ENCODE measurements at regions of chr1 and their contacts with region 1.

Region 1: DNA sequence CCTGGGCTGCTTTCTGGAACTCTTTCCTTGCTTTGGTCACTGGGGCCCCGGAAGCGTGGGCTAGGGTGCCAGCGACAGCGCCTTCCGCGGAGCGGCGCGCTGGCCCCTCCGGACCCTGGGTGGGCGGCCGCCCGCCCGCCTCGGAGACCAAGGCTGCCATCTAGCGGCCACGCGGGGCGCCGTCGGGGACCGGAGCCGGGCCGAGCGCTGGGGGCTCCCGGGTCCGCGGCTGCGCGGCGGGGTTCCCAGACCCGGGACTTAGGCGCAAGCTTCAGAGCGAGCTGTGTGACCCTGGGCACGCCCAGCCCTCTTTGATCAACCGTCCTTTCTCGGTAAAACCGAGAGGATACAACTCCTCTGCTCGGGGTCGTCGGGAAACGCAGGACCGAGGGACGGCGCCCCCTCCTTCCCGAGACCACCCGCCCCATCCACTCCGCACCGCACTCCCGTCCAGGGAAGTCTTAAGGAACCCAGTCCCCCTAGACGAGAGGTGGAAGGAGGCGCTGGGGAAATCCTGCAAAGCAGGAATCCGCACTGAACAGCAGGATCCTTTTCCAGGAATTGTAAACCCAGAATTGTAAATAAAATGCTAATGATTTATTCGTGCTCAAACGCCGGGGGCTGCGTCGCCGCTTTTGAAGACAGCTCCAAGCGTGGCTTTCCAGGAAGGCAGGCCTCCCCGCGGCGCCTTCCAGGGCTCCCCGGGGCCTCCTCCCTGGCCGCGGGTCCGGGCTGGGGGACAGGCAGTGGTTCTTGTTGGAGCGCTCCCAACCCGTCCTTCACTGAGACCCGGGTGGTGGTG is 41.2 kb downstream of the RRAGC start:
- DNase-seq: peak; percentile 79
- CTCF ChIP-seq: peak; percentile 84

Region 2: DNA sequence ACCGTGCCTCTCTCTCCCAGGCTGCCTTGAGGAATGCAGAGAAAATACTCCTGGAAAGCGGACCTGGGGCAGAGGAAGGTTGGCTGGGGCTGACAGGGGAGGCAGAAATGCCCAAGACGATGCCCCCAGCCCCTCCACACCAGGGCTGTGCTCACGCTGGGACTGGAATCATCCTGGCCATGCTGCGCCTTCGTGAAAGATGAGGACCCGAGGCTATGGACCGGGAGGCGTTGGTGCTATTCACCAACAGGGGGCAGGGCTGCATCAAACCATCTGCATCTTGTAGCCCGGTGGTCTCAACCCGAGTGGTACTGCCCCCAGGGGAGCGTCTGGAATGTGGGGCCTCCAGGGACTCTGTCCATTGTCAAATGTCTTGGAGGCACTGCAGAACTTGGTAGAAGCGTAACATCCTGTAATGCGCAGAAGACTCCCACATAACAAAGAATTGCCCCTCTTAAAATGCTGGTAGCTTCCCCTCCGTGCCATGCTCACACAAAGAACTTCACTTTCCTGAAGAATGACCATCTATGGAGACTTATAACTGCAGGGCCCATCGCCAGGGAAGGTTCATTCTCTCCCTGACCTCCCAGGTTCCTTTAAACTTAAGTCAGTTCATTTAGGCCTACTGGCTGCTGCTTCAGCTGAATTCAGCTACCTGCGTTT is 210.0 kb before region 1 on chr1:
- CTCF ChIA-PET with region 1: interaction called, 10 read pairs
- POLR2A ChIA-PET with region 1: no interaction called
- DNase-seq: peak; percentile 65
- CTCF ChIP-seq: peak; percentile 60

Region 3: DNA sequence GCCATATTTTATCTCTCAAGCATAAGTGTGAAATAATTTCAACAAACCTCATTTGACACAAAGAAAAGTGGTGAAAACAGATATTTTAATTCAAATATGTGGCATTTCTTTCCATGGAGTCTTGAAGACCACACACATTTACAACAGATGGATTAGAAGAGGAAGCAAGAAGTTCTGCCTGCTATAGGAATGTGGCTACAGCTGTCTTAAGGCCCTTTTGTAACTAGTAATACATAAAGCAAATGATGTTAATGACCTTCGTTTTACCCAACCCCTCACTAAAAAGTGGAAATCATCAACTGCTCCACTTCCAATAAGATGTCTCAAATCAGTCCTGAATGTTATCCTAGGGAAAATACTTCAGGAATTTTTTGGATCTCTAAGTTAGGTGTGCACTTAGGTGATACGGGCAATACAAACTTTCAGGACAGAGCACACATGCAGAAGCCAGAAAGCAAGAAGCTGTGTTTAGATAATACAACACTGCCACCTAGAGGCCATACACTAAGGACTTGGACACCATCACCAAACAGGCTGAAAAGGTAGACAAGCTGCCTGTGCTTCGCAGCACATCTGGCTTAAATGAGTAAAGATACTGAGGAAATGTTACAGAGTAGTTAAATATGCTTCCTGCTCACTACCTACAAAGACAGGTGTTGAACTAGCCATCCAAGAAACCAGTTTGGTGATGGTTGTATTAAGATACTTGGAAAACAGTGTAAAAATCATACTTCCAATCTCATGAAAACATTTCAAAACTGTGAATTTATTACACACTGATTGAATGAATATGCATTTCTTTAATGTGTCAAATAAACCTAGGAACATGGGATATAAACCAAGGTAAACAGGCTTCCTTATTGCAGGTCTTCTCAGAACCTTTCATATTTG is 16.8 kb after region 1 on chr1:
- CTCF ChIA-PET with region 1: interaction called, 22 read pairs
- POLR2A ChIA-PET with region 1: no interaction called
- DNase-seq: peak; percentile 67
- CTCF ChIP-seq: peak; percentile 78

Region 4: DNA sequence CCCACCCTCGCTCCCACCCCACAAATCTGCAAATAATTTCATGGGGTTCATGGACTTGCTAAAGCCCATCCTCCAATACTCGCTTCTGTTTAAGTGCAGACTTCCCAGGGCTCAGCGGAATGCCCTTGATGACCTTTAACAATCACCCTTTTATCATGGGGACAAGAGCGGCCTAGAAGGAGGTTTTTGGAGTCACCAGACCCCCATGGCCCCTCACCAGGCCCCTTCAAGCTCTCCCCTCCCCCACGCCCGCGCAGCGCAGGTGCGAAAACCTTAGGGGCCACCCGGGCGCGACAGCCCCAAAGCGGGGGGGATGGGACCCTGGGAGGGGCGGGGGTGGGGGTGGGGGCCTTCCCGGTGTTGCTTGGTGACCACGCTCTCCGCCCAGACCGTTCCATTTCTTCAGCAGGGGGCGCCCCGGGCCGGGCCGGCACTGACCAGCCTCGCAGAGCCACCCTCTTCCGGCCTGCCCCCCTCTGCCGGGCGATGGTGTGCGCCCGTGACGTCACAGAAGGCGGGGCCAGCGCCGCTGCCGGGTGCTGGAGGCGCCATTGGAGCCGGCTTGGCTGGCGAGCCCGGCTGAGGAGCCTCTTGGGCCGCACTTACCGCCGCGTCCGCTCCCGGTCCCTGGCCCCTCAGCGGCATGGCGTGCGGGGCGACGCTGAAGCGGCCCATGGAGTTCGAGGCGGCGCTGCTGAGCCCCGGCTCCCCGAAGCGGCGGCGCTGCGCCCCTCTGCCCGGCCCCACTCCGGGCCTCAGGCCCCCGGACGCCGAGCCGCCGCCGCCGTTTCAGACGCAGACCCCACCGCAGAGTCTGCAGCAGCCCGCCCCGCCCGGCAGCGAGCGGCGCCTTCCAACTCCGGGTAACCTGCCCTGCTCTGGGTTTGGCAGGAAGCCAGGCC is 172.6 kb after region 1 on chr1 and contains the start of gene AKIRIN1:
- CTCF ChIA-PET with region 1: no interaction called
- POLR2A ChIA-PET with region 1: interaction called, 11 read pairs
- DNase-seq: peak; percentile 99
- CTCF ChIP-seq: no peak

Measured in GM10248 (cell line).